CD4-positive, alpha-beta T cell (primary cell): ENCODE measurements at regions of chr17 and their contacts with region 1.

Region 1: DNA sequence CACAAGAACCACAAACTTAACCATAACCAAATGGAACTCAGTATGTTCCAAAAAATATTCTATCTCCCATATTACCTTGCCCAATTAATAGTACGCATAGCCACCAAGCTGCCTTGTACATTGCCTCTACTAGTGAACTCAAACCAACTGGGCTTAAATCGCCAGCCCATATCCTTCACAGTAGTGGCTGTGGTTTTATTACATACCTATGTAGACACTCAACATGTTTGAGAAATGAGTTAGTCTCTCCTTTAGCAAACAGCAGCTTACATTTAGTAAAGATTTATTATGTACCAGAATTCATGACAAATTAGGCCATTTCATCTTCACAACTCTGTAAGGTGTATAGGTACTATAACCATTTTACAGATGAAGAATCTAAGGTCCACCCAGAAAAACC is 41.4 kb downstream of the GRB2 start:
- DNase-seq: no peak
- ATAC-seq: no peak
- H3K4me3 ChIP-seq: no peak overlapping the region
- H3K4me3 Mint-ChIP-seq: peak overlapping the region; percentile 4
- H3K27ac ChIP-seq: no peak overlapping the region
- H3K27ac Mint-ChIP-seq: peak overlapping the region; percentile 51
- H3K4me1 ChIP-seq: peaks cover 50% of the 10 kb centered on the region
- H3K4me1 Mint-ChIP-seq: peaks cover 91% of the 10 kb centered on the region
- H3K27me3 ChIP-seq: no peaks in the 10 kb centered on the region
- H3K27me3 Mint-ChIP-seq: no peaks in the 10 kb centered on the region
- CTCF ChIP-seq: no peak

Region 2: DNA sequence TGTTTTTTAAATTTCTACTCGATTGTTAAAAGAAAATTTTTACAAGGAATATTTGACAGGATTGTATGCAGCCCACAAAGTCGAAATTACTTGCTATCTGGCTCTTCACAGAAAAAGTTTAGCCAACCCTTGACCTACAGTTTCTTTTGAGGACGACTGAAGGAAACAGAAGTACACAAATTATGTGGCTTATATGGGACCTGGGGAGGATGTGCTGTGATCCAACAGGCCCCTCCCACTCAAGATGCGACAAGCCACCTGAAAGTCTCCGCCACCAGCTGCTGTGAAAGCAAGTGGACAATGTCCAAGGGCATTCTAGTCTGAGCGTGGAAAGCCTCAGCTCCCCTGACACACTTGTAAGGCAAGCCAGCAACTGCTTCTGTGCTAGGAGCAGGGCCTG is 32.4 kb before region 1 on chr17:
- CTCF ChIA-PET with region 1: no interaction called
- POLR2A ChIA-PET with region 1: interaction called, 5 read pairs
- intact Hi-C with region 1: loop called in 1 of 2 experiments (anchors 5 kb)
- DNase-seq: no peak
- ATAC-seq: no peak
- H3K4me3 ChIP-seq: no peak overlapping the region
- H3K4me3 Mint-ChIP-seq: peak overlapping the region; percentile 20
- H3K27ac ChIP-seq: no peak overlapping the region
- H3K27ac Mint-ChIP-seq: peak overlapping the region; percentile 62
- H3K4me1 ChIP-seq: peaks cover 37% of the 10 kb centered on the region
- H3K4me1 Mint-ChIP-seq: peaks cover 54% of the 10 kb centered on the region
- H3K27me3 ChIP-seq: no peaks in the 10 kb centered on the region
- H3K27me3 Mint-ChIP-seq: no peaks in the 10 kb centered on the region
- CTCF ChIP-seq: no peak

Region 3: GRCh38 chr17:75350706-75351105 is 13.4 kb before region 1 on chr17:
- CTCF ChIA-PET with region 1: interaction called, 3 read pairs
- POLR2A ChIA-PET with region 1: interaction called, 4 read pairs
- intact Hi-C with region 1: loop called in 1 of 2 experiments (anchors 2 kb)
- DNase-seq: no peak
- ATAC-seq: no peak
- H3K4me3 ChIP-seq: no peak overlapping the region
- H3K4me3 Mint-ChIP-seq: peak overlapping the region; percentile 1
- H3K27ac ChIP-seq: no peak overlapping the region
- H3K27ac Mint-ChIP-seq: peak overlapping the region; percentile 85
- H3K4me1 ChIP-seq: peaks cover 61% of the 10 kb centered on the region
- H3K4me1 Mint-ChIP-seq: peaks cover 84% of the 10 kb centered on the region
- H3K27me3 ChIP-seq: no peaks in the 10 kb centered on the region
- H3K27me3 Mint-ChIP-seq: no peaks in the 10 kb centered on the region
- CTCF ChIP-seq: no peak